Spleen (tissue), 13 donors: ENCODE measurements at regions of chr6 and their contacts with region 1.

Region 1: GRCh38 chr6:127317388-127318128 is 25.9 kb downstream of the ECHDC1 start:
- DNase-seq: no peak
- H3K4me3 ChIP-seq: peak overlapping the region in 1 of 8 donors; percentile 3
- H3K27ac ChIP-seq: peak overlapping the region in 7 of 8 donors; percentile 8 to 76 (median 44)
- H3K4me1 ChIP-seq: peaks cover 0 to 8% (median 2%) of the 10 kb centered on the region in 6 donors
- H3K27me3 ChIP-seq: no peaks in the 10 kb centered on the region
- CTCF ChIP-seq: no peak
- POLR2A ChIP-seq: no peak

Region 2: DNA sequence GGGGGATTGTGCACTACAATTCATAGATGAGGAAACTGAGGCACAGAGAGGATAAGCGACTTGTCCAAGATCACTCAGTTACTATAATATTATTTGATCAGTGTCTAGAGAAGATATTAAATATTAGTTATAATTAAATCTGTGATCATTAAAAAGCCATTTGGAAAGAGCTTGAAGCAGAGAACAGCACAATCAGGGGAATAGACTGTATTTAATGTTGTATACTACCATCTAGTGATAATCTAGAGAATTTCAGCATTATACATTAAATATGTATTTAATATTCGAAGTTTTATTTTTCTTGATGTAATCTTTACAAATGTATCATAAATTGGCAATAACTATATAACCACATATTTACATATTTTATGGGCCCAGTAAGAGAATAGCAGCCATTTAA is 221.7 kb after region 1 on chr6:
- intact Hi-C with region 1: loop called (anchors 10 kb)
- DNase-seq: no peak
- H3K4me3 ChIP-seq: no peak overlapping the region
- H3K27ac ChIP-seq: no peak overlapping the region
- H3K4me1 ChIP-seq: no peaks in the 10 kb centered on the region
- H3K27me3 ChIP-seq: peaks cover 0 to 4% (median 0%) of the 10 kb centered on the region in 7 donors
- CTCF ChIP-seq: peak in 8 of 11 experiments; percentile 11 to 48 (median 40)
- POLR2A ChIP-seq: no peak

Region 3: DNA sequence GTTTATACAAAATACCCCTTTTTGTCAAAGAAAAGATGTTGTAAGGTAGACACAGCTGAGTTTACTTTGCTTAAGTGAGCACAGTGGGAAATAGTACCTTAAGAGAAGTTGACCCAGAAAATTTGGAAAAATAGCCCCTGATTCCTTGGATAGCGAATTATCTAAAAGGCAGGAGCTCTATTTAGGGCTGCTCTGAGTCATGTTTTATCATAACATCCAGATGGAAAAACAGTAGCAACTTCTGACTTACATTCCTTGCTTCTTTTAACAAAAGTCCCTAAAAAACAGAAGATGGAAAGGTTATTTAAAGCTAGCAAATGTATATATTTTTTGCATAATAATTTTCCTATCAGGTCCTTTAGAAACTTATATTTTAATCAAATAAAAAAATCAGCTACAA is 524.3 kb after region 1 on chr6:
- intact Hi-C with region 1: no loop called
- DNase-seq: no peak
- H3K4me3 ChIP-seq: no peak overlapping the region
- H3K27ac ChIP-seq: no peak overlapping the region
- H3K4me1 ChIP-seq: peaks cover 0 to 4% (median 0%) of the 10 kb centered on the region in 6 donors
- H3K27me3 ChIP-seq: no peaks in the 10 kb centered on the region
- CTCF ChIP-seq: no peak
- POLR2A ChIP-seq: no peak